ENCODE measurements at regions of chr6 and their contacts with region 1.

Region 1: GRCh38 chr6:26204332-26205165 is 117.3 kb downstream of the HFE start:
- DNase-seq: peak; percentile 91
- ATAC-seq: peak; percentile 75
- H3K4me3 Mint-ChIP-seq: no peak overlapping the region
- H3K27ac Mint-ChIP-seq: no peak overlapping the region
- H3K4me1 Mint-ChIP-seq: peaks cover 17% of the 10 kb centered on the region
- H3K27me3 Mint-ChIP-seq: no peaks in the 10 kb centered on the region
- CTCF ChIP-seq: no peak

Region 2: GRCh38 chr6:26175428-26176181 is 28.9 kb before region 1 on chr6:
- CTCF ChIA-PET with region 1: interaction called, 10 read pairs
- POLR2A ChIA-PET with region 1: interaction called, 182 read pairs
- intact Hi-C with region 1: no loop called
- DNase-seq: peak; percentile 72
- ATAC-seq: peak; percentile 17
- H3K4me3 Mint-ChIP-seq: peak overlapping the region; percentile 46
- H3K27ac Mint-ChIP-seq: peak overlapping the region; percentile 63
- H3K4me1 Mint-ChIP-seq: peaks cover 38% of the 10 kb centered on the region
- H3K27me3 Mint-ChIP-seq: no peaks in the 10 kb centered on the region
- CTCF ChIP-seq: peak; percentile 86

Region 3: DNA sequence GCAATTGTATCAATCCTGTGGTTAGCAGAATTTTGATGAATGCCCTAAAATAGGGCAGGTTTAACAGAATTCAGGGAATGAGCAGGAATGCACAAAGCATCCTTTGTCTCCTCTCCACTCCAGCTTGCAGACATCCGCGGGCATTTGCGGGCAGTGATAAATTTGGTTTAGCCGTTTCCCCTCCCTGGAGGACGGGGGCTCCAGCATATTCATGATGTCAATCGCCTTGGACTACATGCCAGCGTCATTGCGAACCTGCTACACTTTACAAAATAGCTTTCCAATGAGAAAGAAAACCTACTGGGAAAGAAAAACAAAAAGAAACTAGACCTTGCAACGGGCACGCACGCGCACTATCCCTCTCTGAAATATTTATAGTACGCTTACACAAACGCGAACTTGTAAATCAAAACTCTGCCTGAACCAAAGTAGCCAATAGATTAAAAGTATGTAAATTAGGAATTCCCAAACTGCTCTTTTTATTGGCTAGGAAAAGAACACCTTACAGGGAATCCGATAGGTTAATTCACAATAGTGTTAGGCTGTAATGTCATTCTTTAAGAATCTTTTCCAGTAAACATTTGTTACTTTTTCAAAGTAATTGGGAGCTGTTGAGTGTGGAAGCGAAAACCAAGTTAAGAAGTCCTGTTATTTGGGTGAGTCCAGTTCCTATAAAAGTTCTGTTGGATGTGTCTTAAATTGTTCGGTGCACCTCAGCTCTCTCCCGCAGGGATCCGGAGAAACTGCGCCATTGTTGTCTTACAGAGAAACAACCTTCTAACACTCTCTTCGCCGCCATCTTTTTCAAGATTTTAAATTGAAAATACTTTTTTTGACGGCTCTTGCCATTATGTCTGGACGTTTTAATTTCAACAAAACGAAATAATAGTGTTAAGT is 19.3 kb after region 1 on chr6:
- CTCF ChIA-PET with region 1: no interaction called
- POLR2A ChIA-PET with region 1: interaction called, 883 read pairs
- intact Hi-C with region 1: no loop called
- DNase-seq: peak; percentile 77
- ATAC-seq: peak; percentile 82
- H3K4me3 Mint-ChIP-seq: no peak overlapping the region
- H3K27ac Mint-ChIP-seq: no peak overlapping the region
- H3K4me1 Mint-ChIP-seq: peaks cover 14% of the 10 kb centered on the region
- H3K27me3 Mint-ChIP-seq: no peaks in the 10 kb centered on the region
- CTCF ChIP-seq: no peak

Region 4: DNA sequence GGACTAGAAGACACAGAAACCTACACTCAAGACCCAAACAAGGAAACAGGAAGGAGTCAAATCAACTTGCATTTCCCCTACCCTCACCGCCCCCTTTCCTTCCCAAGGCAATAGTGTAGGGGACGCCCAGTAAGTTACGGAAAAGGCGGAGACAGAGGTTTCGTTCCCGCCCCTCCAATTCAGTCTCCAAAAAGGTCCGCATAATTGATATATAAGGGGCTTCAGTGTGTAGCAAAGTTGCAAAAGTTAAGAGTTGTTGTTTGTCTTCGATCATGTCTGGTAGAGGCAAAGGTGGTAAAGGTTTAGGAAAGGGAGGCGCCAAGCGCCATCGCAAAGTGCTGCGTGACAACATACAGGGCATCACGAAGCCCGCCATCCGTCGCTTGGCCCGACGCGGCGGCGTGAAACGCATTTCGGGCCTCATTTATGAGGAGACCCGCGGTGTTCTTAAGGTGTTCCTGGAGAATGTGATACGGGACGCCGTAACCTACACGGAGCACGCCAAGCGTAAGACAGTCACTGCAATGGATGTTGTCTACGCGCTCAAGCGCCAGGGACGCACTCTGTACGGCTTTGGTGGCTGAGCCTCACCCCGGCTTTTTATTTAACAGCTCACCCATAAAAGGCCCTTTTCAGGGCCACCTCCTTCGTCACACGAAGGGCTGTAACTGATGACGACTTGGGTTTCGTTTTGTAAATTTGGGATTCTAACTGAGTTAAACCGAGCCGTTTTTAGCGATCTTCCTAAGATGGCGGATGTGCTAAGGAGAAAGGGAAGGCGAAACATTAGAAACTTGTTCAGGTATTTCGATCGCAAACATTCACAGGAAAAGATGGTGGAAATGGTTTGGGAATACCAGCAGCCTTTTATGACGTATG is 35.8 kb after region 1 on chr6:
- CTCF ChIA-PET with region 1: no interaction called
- POLR2A ChIA-PET with region 1: interaction called, 351 read pairs
- intact Hi-C with region 1: no loop called
- DNase-seq: peak; percentile 88
- ATAC-seq: peak; percentile 82
- H3K4me3 Mint-ChIP-seq: peak overlapping the region; percentile 77
- H3K27ac Mint-ChIP-seq: peak overlapping the region; percentile 92
- H3K4me1 Mint-ChIP-seq: peaks cover 32% of the 10 kb centered on the region
- H3K27me3 Mint-ChIP-seq: no peaks in the 10 kb centered on the region
- CTCF ChIP-seq: no peak

Region 5: GRCh38 chr6:26304797-26305640 is 100.5 kb after region 1 on chr6:
- CTCF ChIA-PET with region 1: no interaction called
- POLR2A ChIA-PET with region 1: no interaction called
- intact Hi-C with region 1: no loop called
- DNase-seq: peak; percentile 80
- ATAC-seq: peak; percentile 62
- H3K4me3 Mint-ChIP-seq: peak overlapping the region; percentile 71
- H3K27ac Mint-ChIP-seq: peak overlapping the region; percentile 84
- H3K4me1 Mint-ChIP-seq: peaks cover 51% of the 10 kb centered on the region
- H3K27me3 Mint-ChIP-seq: no peaks in the 10 kb centered on the region
- CTCF ChIP-seq: no peak